GM12878 (cell line): ENCODE measurements at regions of chr4 and their contacts with region 1.

Region 1: DNA sequence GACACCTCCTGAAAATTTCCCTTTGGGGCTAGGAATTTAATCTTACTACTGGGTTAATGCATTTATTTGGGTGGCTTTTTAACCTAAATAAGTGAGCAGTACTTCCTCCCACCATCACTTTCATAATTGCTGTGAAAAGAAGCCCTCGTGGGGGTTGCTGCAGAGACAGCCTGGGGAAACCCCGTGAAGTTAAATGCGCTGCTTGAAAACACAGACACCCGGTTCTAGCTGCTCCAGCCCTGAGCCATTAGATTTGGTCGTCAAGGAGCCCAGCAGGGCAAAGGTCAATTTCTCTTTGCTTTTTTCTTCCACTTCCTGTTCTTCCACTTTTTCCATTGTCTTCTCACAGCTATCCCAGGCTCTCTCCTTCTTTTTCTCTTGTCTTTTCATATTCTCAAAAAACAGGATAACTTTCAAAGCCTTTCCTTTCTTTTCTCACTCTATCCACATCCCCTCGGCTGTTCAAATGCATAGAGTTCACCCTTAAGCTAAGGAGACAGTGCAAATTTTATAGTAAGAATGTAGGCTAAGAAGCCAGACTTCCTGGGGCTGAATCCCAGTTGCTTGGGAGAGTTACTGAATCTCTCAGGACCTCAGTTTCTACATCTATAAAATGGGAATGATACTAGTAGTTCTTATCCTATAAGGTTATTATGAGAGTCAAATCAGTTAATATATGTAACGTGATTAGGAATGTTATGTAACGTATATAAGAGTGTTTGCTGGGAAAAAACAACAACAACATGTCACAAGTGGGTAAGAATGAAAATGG is 91.5 kb upstream of the ZNF827 start:
- DNase-seq: peak; percentile 48
- ATAC-seq: peak; percentile 89
- H3K4me3 ChIP-seq: peak overlapping the region; percentile 56
- H3K27ac ChIP-seq: peak overlapping the region; percentile 88
- H3K4me1 ChIP-seq: peaks cover 45% of the 10 kb centered on the region
- H3K27me3 ChIP-seq: no peaks in the 10 kb centered on the region
- CTCF ChIP-seq: no peak
- EP300 ChIP-seq: no peak
- POLR2A ChIP-seq: no peak
- RAD21 ChIP-seq: 0 out of 2 replicates have a peak, but pooled peaks have one; percentile 22

Region 2: GRCh38 chr4:146049802-146050201 is 19.7 kb after region 1 on chr4:
- CTCF ChIA-PET with region 1: interaction called, 4 read pairs
- POLR2A ChIA-PET with region 1: no interaction called
- RAD21 ChIA-PET with region 1: interaction called, 11 read pairs
- SMC1A ChIA-PET with region 1: interaction called, 23 read pairs
- in situ Hi-C with region 1: no loop called
- intact Hi-C with region 1: no loop called
- DNase-seq: peak; percentile 56
- ATAC-seq: peak; percentile 77
- H3K4me3 ChIP-seq: no peak overlapping the region
- H3K27ac ChIP-seq: peak overlapping the region; percentile 38
- H3K4me1 ChIP-seq: peaks cover 31% of the 10 kb centered on the region
- H3K27me3 ChIP-seq: no peaks in the 10 kb centered on the region
- CTCF ChIP-seq: no peak
- EP300 ChIP-seq: peak in 1 of 2 experiments; percentile 15; a peak in 1 of 4 replicates
- POLR2A ChIP-seq: no peak
- RAD21 ChIP-seq: no peak

Region 3: GRCh38 chr4:146059865-146060264 is 29.7 kb after region 1 on chr4:
- CTCF ChIA-PET with region 1: interaction called, 4 read pairs
- POLR2A ChIA-PET with region 1: interaction called, 5 read pairs
- RAD21 ChIA-PET with region 1: interaction called, 12 read pairs
- SMC1A ChIA-PET with region 1: interaction called, 33 read pairs
- in situ Hi-C with region 1: no loop called
- intact Hi-C with region 1: no loop called
- DNase-seq: peak; percentile 84
- ATAC-seq: peak; percentile 86
- H3K4me3 ChIP-seq: no peak overlapping the region
- H3K27ac ChIP-seq: peak overlapping the region; percentile 86
- H3K4me1 ChIP-seq: peaks cover 50% of the 10 kb centered on the region
- H3K27me3 ChIP-seq: no peaks in the 10 kb centered on the region
- CTCF ChIP-seq: no peak
- EP300 ChIP-seq: peak; percentile 31 to 73; a peak in 3 of 4 replicates
- POLR2A ChIP-seq: 0 out of 2 replicates have a peak, but pooled peaks have one; percentile 24
- RAD21 ChIP-seq: peak; percentile 23; the same call in 1 of the 2 replicates

Region 4: GRCh38 chr4:146132445-146132844 is 102.3 kb after region 1 on chr4:
- CTCF ChIA-PET with region 1: no interaction called
- POLR2A ChIA-PET with region 1: no interaction called
- RAD21 ChIA-PET with region 1: interaction called, 3 read pairs
- SMC1A ChIA-PET with region 1: no interaction called
- in situ Hi-C with region 1: no loop called
- intact Hi-C with region 1: loop called (anchors 1 kb)
- DNase-seq: peak; percentile 70
- ATAC-seq: peak; percentile 100
- H3K4me3 ChIP-seq: no peak overlapping the region
- H3K27ac ChIP-seq: peak overlapping the region; percentile 1; the same call in 1 of the 2 replicates
- H3K4me1 ChIP-seq: peaks cover 14% of the 10 kb centered on the region
- H3K27me3 ChIP-seq: no peaks in the 10 kb centered on the region
- CTCF ChIP-seq: no peak
- EP300 ChIP-seq: peak; percentile 69 to 72; a peak in 3 of 4 replicates
- POLR2A ChIP-seq: no peak
- RAD21 ChIP-seq: no peak

Region 5: GRCh38 chr4:146175541-146176453 is 145.7 kb after region 1 on chr4 and contains the start of gene LSM6:
- CTCF ChIA-PET with region 1: no interaction called
- POLR2A ChIA-PET with region 1: no interaction called
- RAD21 ChIA-PET with region 1: no interaction called
- SMC1A ChIA-PET with region 1: interaction called, 4 read pairs
- in situ Hi-C with region 1: no loop called
- intact Hi-C with region 1: loop called (anchors 5 kb)
- DNase-seq: peak; percentile 36
- ATAC-seq: peak; percentile 89
- H3K4me3 ChIP-seq: peak within 1 kb of the TSS; percentile 84
- H3K27ac ChIP-seq: peak within 1 kb of the TSS; percentile 92
- H3K4me1 ChIP-seq: peaks cover 13% of the 10 kb centered on the region
- H3K27me3 ChIP-seq: no peaks in the 10 kb centered on the region
- CTCF ChIP-seq: no peak
- EP300 ChIP-seq: no peak
- POLR2A ChIP-seq: peak; percentile 87
- RAD21 ChIP-seq: no peak
- polyA plus RNA-seq, gene LSM6: 261 to 262 TPM

Region 6: DNA sequence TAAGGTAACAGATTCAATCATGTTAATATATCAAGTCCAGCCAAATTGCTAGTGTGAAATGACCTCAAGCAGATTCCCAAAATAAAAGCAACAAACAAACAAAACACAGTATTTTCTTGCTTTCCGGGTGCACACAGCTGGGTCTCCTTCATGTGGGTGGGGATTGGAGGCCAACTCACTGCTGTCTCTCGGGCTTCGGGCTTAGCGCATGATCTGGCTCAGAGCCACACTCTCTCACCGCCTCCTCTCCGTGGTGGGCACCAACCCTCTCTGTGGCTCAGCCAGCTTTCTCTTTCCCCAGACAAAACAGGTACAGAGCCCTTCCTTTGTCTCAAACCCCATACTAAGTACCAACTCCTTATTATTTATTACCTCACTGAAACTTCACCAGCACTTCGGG is 181.3 kb after region 1 on chr4:
- CTCF ChIA-PET with region 1: no interaction called
- POLR2A ChIA-PET with region 1: no interaction called
- RAD21 ChIA-PET with region 1: no interaction called
- SMC1A ChIA-PET with region 1: no interaction called
- in situ Hi-C with region 1: no loop called
- intact Hi-C with region 1: no loop called
- DNase-seq: no peak
- ATAC-seq: no peak
- H3K4me3 ChIP-seq: no peak overlapping the region
- H3K27ac ChIP-seq: no peak overlapping the region
- H3K4me1 ChIP-seq: no peaks in the 10 kb centered on the region
- H3K27me3 ChIP-seq: no peaks in the 10 kb centered on the region
- CTCF ChIP-seq: no peak
- EP300 ChIP-seq: no peak
- POLR2A ChIP-seq: no peak
- RAD21 ChIP-seq: no peak